HCT116 (cell line): ENCODE measurements at regions of chr3 and their contacts with region 1.

Region 1: GRCh38 chr3:41198950-41199865 is at the start of gene CTNNB1:
- DNase-seq: peak; percentile 83
- ATAC-seq: peak; percentile 82
- H3K4me3 ChIP-seq: peak within 1 kb of the TSS; percentile 85 to 91
- H3K27ac ChIP-seq: peak within 1 kb of the TSS; percentile 90
- H3K4me1 ChIP-seq: peaks cover 20 to 32% of the 10 kb centered on the region in 2 experiments
- H3K27me3 ChIP-seq: peaks cover 8% of the 10 kb centered on the region; the same call in 1 of the 2 replicates
- CTCF ChIP-seq: no peak
- POLR2A ChIP-seq: peak; percentile 91
- RAD21 ChIP-seq: peak; percentile 16
- total RNA-seq, gene CTNNB1: 265 TPM

Region 2: DNA sequence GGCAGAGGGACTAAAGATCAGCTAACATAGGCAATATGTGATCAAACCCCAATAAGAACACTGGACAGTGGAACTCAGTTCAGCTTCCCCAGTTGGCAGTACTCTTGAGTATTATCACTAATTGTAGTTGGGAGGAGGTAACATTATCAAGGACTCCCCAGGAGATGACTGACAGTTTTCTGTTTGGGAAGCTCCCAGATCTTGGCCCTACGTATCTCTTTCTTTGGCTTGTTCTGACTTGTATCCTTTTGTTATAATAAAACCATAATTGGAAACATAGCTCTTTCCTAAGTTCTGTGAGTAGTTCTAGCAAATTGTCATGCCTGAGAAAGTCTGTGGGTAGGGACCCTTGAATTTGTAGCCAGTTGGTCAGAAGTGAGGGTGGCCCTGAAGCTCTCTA is 358.1 kb before region 1 on chr3:
- CTCF ChIA-PET with region 1: no interaction called
- POLR2A ChIA-PET with region 1: no interaction called
- RAD21 ChIA-PET with region 1: no interaction called
- intact Hi-C with region 1: no loop called
- DNase-seq: no peak
- ATAC-seq: no peak
- H3K4me3 ChIP-seq: no peak overlapping the region
- H3K27ac ChIP-seq: no peak overlapping the region
- H3K4me1 ChIP-seq: no peaks in the 10 kb centered on the region
- H3K27me3 ChIP-seq: no peaks in the 10 kb centered on the region
- CTCF ChIP-seq: no peak
- POLR2A ChIP-seq: no peak
- RAD21 ChIP-seq: no peak

Region 3: DNA sequence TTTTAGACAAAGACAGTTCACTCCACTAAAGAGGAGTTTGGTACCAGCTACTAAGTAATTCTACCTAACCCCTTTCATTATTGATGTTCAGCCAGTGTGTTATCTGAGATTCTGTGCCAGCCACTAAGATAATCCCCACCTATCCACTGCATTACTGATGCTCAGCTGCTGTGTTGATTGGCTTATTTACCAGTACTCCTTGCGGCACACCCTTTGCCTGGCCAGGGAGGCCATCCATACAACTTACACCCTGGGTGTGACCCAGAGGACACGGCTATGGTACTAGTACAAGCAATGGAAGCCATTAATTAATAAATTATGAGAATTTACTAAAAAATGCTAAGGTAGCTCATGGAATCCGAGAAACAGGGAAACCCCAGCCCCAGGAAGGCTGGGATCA is 290.6 kb before region 1 on chr3:
- CTCF ChIA-PET with region 1: no interaction called
- POLR2A ChIA-PET with region 1: no interaction called
- RAD21 ChIA-PET with region 1: no interaction called
- intact Hi-C with region 1: no loop called
- DNase-seq: no peak
- ATAC-seq: no peak
- H3K4me3 ChIP-seq: no peak overlapping the region
- H3K27ac ChIP-seq: no peak overlapping the region
- H3K4me1 ChIP-seq: no peaks in the 10 kb centered on the region
- H3K27me3 ChIP-seq: no peaks in the 10 kb centered on the region
- CTCF ChIP-seq: no peak
- POLR2A ChIP-seq: no peak
- RAD21 ChIP-seq: no peak

Region 4: GRCh38 chr3:41213588-41213987 is 14.4 kb after region 1 on chr3:
- CTCF ChIA-PET with region 1: interaction called, 5 read pairs
- POLR2A ChIA-PET with region 1: interaction called, 13 read pairs
- RAD21 ChIA-PET with region 1: no interaction called
- intact Hi-C with region 1: no loop called
- DNase-seq: no peak
- ATAC-seq: no peak
- H3K4me3 ChIP-seq: no peak overlapping the region
- H3K27ac ChIP-seq: no peak overlapping the region
- H3K4me1 ChIP-seq: no peaks in the 10 kb centered on the region
- H3K27me3 ChIP-seq: no peaks in the 10 kb centered on the region
- CTCF ChIP-seq: no peak
- POLR2A ChIP-seq: no peak
- RAD21 ChIP-seq: no peak

Region 5: DNA sequence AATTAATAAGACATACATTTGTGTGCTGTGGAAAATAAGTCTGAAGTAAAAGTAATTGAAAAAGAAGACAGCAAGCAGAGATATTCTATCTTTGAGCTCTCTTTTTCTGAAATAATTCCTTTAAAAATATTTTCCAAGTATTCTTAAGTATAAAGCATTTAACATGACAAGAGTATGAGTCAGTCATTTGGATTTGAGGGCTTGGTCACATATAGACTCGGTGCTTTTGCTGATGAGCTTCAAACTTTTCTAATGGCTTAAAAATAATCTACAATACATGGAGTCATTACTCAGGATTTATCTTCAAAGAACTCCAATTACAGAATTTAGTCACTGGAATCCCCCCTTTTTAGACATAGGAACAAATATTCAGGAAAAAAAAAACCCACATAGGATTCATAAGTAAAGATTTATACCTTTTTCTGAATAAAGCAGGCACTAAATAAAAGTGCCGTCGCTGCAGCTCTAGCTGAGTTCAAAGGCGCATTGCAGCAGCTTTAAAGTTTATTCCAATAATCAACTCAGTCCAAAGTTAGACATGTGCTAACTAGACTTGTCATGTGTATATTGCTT is 147.6 kb after region 1 on chr3:
- CTCF ChIA-PET with region 1: no interaction called
- POLR2A ChIA-PET with region 1: no interaction called
- RAD21 ChIA-PET with region 1: no interaction called
- intact Hi-C with region 1: no loop called
- DNase-seq: no peak
- ATAC-seq: no peak
- H3K4me3 ChIP-seq: no peak overlapping the region
- H3K27ac ChIP-seq: no peak overlapping the region
- H3K4me1 ChIP-seq: no peaks in the 10 kb centered on the region
- H3K27me3 ChIP-seq: no peaks in the 10 kb centered on the region
- CTCF ChIP-seq: no peak
- POLR2A ChIP-seq: no peak
- RAD21 ChIP-seq: no peak